Dorsolateral prefrontal cortex (tissue), 120 donors: ENCODE measurements at regions of chr17 and their contacts with region 1.

Region 1: GRCh38 chr17:45021607-45022287 is 29.7 kb downstream of the DCAKD start:
- DNase-seq: peak in 4 of 10 donors; percentile 47 to 81 (median 68)
- H3K4me3 ChIP-seq: peak overlapping the region; percentile 5 to 67 (median 50)
- H3K27ac ChIP-seq: peak overlapping the region in 45 of 59 donors; percentile 10 to 82 (median 57)
- H3K27me3 ChIP-seq: peaks cover 0 to 5% (median 0%) of the 10 kb centered on the region in 45 donors
- CTCF ChIP-seq: peak; percentile 39 to 99 (median 89)

Region 2: GRCh38 chr17:44775136-44775837 is 246.5 kb before region 1 on chr17:
- intact Hi-C with region 1: loop called in 1 of 2 experiments (anchors 5 kb)
- DNase-seq: peak; percentile 91 to 100 (median 96)
- H3K4me3 ChIP-seq: peak overlapping the region; percentile 32 to 90 (median 68)
- H3K27ac ChIP-seq: peak overlapping the region in 33 of 59 donors; percentile 1 to 76 (median 51)
- H3K27me3 ChIP-seq: no peaks in the 10 kb centered on the region
- CTCF ChIP-seq: peak in 31 of 56 donors; percentile 2 to 56 (median 19)

Region 3: GRCh38 chr17:44919885-44920564 is 101.7 kb before region 1 on chr17:
- intact Hi-C with region 1: loop called (anchors 1 to 2 kb)
- DNase-seq: peak; percentile 64 to 89 (median 86)
- H3K4me3 ChIP-seq: no peak overlapping the region
- H3K27ac ChIP-seq: peak overlapping the region in 26 of 59 donors; percentile 0 to 71 (median 30)
- H3K27me3 ChIP-seq: peaks cover 0 to 31% (median 0%) of the 10 kb centered on the region in 45 donors
- CTCF ChIP-seq: peak in 55 of 56 donors; percentile 70 to 94 (median 85)

Region 4: DNA sequence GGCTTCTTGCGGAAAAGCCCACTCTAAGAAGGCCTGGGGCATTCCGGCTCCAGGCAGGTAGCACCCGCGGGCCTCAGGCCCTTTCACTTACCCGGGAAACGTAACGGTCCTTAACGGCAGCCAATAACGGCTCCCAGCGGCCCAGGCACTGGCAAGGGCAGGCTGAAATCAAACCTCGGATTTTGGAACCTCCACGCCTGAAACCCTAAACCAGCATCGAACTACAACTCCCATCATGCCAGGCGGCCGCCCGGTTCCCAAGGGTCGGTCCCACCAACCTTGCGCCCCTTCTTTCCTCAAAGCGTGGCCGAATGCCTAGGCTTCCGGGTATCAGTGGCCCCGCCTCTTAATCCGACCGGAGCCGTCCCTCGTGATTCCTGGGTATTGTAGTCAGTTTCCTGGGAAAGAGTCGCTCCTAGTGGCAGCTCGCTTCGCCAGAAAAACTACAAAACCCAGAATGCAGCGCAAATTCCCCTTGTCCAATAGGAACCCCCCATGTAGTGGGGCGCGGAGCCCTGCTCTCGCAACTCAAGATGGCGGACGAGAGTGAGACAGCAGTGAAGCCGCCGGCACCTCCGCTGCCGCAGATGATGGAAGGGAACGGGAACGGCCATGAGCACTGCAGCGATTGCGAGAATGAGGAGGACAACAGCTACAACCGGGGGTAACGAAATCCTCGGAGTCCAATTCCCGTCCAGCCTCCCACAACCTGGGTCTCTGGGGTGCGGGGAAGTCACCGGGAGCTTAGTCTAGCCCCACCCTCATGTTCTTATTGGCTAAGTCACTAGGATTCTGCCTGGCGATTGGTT is 39.3 kb after region 1 on chr17 and contains the start of gene NMT1:
- intact Hi-C with region 1: loop called in 1 of 2 experiments (anchors 2 kb)
- DNase-seq: peak; percentile 96 to 99 (median 99)
- H3K4me3 ChIP-seq: peak within 1 kb of the TSS; percentile 66 to 99 (median 84)
- H3K27ac ChIP-seq: peak within 1 kb of the TSS; percentile 53 to 99 (median 93)
- H3K27me3 ChIP-seq: no peaks in the 10 kb centered on the region
- CTCF ChIP-seq: peak in 41 of 56 donors; percentile 4 to 63 (median 37)
- total RNA-seq, gene NMT1: 111 to 220 (median 159) TPM

Region 5: GRCh38 chr17:45098869-45099616 is 77.3 kb after region 1 on chr17:
- intact Hi-C with region 1: loop called (anchors 5 to 10 kb)
- DNase-seq: peak; percentile 78 to 96 (median 86)
- H3K4me3 ChIP-seq: peak overlapping the region in 3 of 59 donors; percentile 8 to 15 (median 11)
- H3K27ac ChIP-seq: peak overlapping the region in 56 of 59 donors; percentile 11 to 90 (median 77)
- H3K27me3 ChIP-seq: no peaks in the 10 kb centered on the region
- CTCF ChIP-seq: peak; percentile 51 to 90 (median 81)